PC-3 (cell line): ENCODE measurements at regions of chr1 and their contacts with region 1.

Region 1: GRCh38 chr1:180863158-180863775 is 49.4 kb upstream of the KIAA1614 start:
- DNase-seq: peak; percentile 71
- ATAC-seq: no peak
- H3K4me3 ChIP-seq: no peak overlapping the region
- H3K27ac ChIP-seq: no peak overlapping the region
- H3K4me1 ChIP-seq: no peaks in the 10 kb centered on the region
- H3K27me3 ChIP-seq: no peaks in the 10 kb centered on the region
- CTCF ChIP-seq: peak; percentile 69

Region 2: GRCh38 chr1:180533266-180533987 is 329.8 kb before region 1 on chr1:
- CTCF ChIA-PET with region 1: interaction called, 3 read pairs
- POLR2A ChIA-PET with region 1: no interaction called
- intact Hi-C with region 1: loop called (anchors 5 kb)
- DNase-seq: peak; percentile 67
- ATAC-seq: peak; percentile 56
- H3K4me3 ChIP-seq: no peak overlapping the region
- H3K27ac ChIP-seq: no peak overlapping the region
- H3K4me1 ChIP-seq: peaks cover 7% of the 10 kb centered on the region; the same call in 1 of the 2 replicates
- H3K27me3 ChIP-seq: no peaks in the 10 kb centered on the region
- CTCF ChIP-seq: peak; percentile 83

Region 3: GRCh38 chr1:180778782-180779398 is 84.4 kb before region 1 on chr1:
- CTCF ChIA-PET with region 1: interaction called, 4 read pairs
- POLR2A ChIA-PET with region 1: no interaction called
- intact Hi-C with region 1: loop called (anchors 5 kb)
- DNase-seq: peak; percentile 38
- ATAC-seq: peak; percentile 53
- H3K4me3 ChIP-seq: no peak overlapping the region
- H3K27ac ChIP-seq: no peak overlapping the region
- H3K4me1 ChIP-seq: no peaks in the 10 kb centered on the region
- H3K27me3 ChIP-seq: no peaks in the 10 kb centered on the region
- CTCF ChIP-seq: peak; percentile 71